Caco-2 (cell line): ENCODE measurements at regions of chr17 and their contacts with region 1.

Region 1: GRCh38 chr17:28842282-28843012 is at the start of gene FAM222B:
- DNase-seq: peak; percentile 90 to 94
- H3K4me3 ChIP-seq: peak within 1 kb of the TSS; percentile 84
- H3K4me3 Mint-ChIP-seq: peak within 1 kb of the TSS; percentile 98
- H3K27ac Mint-ChIP-seq: peak within 1 kb of the TSS; percentile 82
- H3K4me1 ChIP-seq: peaks cover 8% of the 10 kb centered on the region
- H3K4me1 Mint-ChIP-seq: no peaks in the 10 kb centered on the region
- H3K27me3 ChIP-seq: no peaks in the 10 kb centered on the region
- H3K27me3 Mint-ChIP-seq: no peaks in the 10 kb centered on the region
- CTCF ChIP-seq: peak in 1 of 2 experiments; percentile 6
- total RNA-seq, gene FAM222B: 37.6 and 39.5 TPM in 2 replicates

Region 2: GRCh38 chr17:28295677-28296578 is 546.5 kb before region 1 on chr17:
- CTCF ChIA-PET with region 1: no interaction called
- POLR2A ChIA-PET with region 1: no interaction called
- intact Hi-C with region 1: no loop called
- DNase-seq: no peak
- H3K4me3 ChIP-seq: no peak overlapping the region
- H3K4me3 Mint-ChIP-seq: no peak overlapping the region
- H3K27ac Mint-ChIP-seq: no peak overlapping the region
- H3K4me1 ChIP-seq: peaks cover 15% of the 10 kb centered on the region
- H3K4me1 Mint-ChIP-seq: peaks cover 15% of the 10 kb centered on the region
- H3K27me3 ChIP-seq: no peaks in the 10 kb centered on the region
- H3K27me3 Mint-ChIP-seq: peaks cover 8% of the 10 kb centered on the region
- CTCF ChIP-seq: no peak

Region 3: GRCh38 chr17:28661635-28662537 is 180.6 kb before region 1 on chr17 and contains the starts of genes SDF2 and SUPT6H:
- CTCF ChIA-PET with region 1: no interaction called
- POLR2A ChIA-PET with region 1: interaction called, 19 read pairs
- intact Hi-C with region 1: no loop called
- DNase-seq: peak; percentile 91 to 94
- H3K4me3 ChIP-seq: peak within 1 kb of the TSS; percentile 80
- H3K4me3 Mint-ChIP-seq: peak within 1 kb of the TSS; percentile 89
- H3K27ac Mint-ChIP-seq: peak within 1 kb of the TSS; percentile 95
- H3K4me1 ChIP-seq: peaks cover 14% of the 10 kb centered on the region; the same call in 1 of the 2 replicates
- H3K4me1 Mint-ChIP-seq: peaks cover 31% of the 10 kb centered on the region
- H3K27me3 ChIP-seq: no peaks in the 10 kb centered on the region
- H3K27me3 Mint-ChIP-seq: no peaks in the 10 kb centered on the region
- CTCF ChIP-seq: no peak
- total RNA-seq, gene SDF2: 63.5 and 64.9 TPM in 2 replicates
- total RNA-seq, gene SUPT6H: 127 and 129 TPM in 2 replicates

Region 4: DNA sequence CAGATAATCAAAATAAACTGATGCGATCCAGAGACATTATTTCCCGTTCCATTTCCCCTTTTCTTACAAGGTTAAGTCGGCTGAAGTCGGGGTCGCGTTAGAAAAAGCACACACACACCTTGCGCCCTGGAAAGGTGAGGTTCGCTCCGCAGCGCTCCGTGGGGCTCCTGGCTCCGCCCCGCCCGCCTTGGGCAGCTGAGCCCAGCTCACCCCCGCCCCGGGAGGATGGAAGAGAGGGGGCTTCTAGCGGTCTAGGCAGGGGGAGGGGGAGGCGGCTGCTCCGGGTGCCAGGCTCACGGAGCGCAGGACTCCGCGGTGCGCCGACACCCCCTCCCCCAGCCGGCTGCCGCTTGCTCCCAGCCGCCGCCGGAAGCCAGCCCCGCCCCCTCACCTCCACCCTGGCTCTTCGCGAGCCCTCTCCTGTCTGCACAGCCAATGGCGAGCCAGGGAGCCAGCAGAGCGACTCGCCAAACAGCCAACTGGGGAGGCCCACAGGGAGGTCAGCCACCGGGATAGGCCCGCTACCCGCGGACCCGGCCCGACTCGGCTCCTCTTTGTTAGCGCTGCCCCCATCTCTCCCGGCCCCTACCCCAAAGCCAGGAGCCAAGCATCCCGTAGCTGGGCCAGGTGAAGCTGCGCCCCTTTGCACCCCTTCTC is 30.2 kb before region 1 on chr17:
- CTCF ChIA-PET with region 1: no interaction called
- POLR2A ChIA-PET with region 1: interaction called, 11 read pairs
- intact Hi-C with region 1: no loop called
- DNase-seq: peak; percentile 99
- H3K4me3 ChIP-seq: peak overlapping the region; percentile 96
- H3K4me3 Mint-ChIP-seq: peak overlapping the region; percentile 93
- H3K27ac Mint-ChIP-seq: peak overlapping the region; percentile 75
- H3K4me1 ChIP-seq: peaks cover 18% of the 10 kb centered on the region
- H3K4me1 Mint-ChIP-seq: no peaks in the 10 kb centered on the region
- H3K27me3 ChIP-seq: no peaks in the 10 kb centered on the region
- H3K27me3 Mint-ChIP-seq: no peaks in the 10 kb centered on the region
- CTCF ChIP-seq: no peak

Region 5: GRCh38 chr17:28878981-28879380 is 36.5 kb after region 1 on chr17:
- CTCF ChIA-PET with region 1: interaction called, 12 read pairs
- POLR2A ChIA-PET with region 1: no interaction called
- intact Hi-C with region 1: no loop called
- DNase-seq: peak; percentile 79 to 82
- H3K4me3 ChIP-seq: no peak overlapping the region
- H3K4me3 Mint-ChIP-seq: no peak overlapping the region
- H3K27ac Mint-ChIP-seq: peak overlapping the region; percentile 30
- H3K4me1 ChIP-seq: 0 out of 2 replicates have a peak, but pooled peaks cover 6% of the 10 kb centered on the region
- H3K4me1 Mint-ChIP-seq: peaks cover 16% of the 10 kb centered on the region
- H3K27me3 ChIP-seq: no peaks in the 10 kb centered on the region
- H3K27me3 Mint-ChIP-seq: no peaks in the 10 kb centered on the region
- CTCF ChIP-seq: peak; percentile 73 to 85